ENCODE measurements at regions of chr19 and their contacts with region 1.

Region 1: DNA sequence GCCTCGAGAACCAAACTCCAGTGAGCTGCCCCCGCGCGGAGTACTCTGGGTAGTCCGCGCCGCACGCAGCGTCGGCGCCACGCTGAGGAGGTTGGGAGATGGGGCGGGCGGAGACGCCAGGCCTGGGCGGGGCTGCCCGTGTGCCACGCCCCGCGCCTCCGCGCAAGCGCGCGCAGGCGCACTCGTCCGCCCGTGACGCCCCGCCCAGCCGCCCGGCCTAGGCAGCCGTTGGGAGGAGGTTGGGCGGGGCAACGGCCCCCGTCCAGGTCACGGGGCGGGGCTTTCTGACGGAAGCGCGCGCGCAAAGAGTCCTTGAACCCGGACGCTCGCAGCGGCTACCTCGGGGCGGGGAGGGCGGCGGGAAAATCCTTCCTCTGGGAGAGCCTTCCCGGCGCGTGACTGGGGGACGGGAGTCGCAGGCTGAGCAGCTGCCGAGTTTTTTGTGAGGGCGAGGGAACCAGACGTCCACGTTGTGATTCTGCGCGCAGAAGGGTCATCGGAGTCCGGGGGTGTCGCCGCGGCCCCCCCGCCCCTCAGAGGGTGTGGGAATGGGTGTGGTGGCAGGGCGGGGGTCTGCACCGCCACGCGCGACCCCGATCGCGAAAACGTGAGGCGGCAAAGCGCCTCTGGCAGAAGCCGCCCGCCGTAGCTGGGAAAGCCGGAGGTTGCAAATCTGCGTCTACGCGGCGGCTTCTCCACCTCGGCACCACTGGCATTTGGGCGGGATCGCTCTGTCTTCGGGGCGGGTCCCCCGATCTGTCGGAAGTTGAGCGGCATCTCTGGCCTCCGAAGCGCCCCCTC is at the start of gene MED26:
- DNase-seq: peak; percentile 95 to 96
- ATAC-seq: peak; percentile 93 to 97 (median 95)
- H3K4me3 ChIP-seq: peak within 1 kb of the TSS; percentile 68 to 99 (median 96)
- H3K27ac ChIP-seq: peak within 1 kb of the TSS; percentile 88 to 99 (median 98)
- H3K4me1 ChIP-seq: peaks cover 0 to 55% (median 48%) of the 10 kb centered on the region in 9 donors
- H3K27me3 ChIP-seq: no peaks in the 10 kb centered on the region
- CTCF ChIP-seq: peak in 5 of 9 donors; percentile 11 to 38 (median 26)
- total RNA-seq, gene MED26: 3.3 to 6.9 (median 4.6) TPM

Region 2: GRCh38 chr19:16572332-16573211 is 55.8 kb before region 1 on chr19 and contains the start of gene SLC35E1:
- intact Hi-C with region 1: loop called (anchors 5 to 10 kb)
- DNase-seq: peak; percentile 94 to 96
- ATAC-seq: peak; percentile 96 to 99 (median 98)
- H3K4me3 ChIP-seq: peak within 1 kb of the TSS; percentile 63 to 97 (median 80)
- H3K27ac ChIP-seq: peak within 1 kb of the TSS; percentile 61 to 91 (median 86)
- H3K4me1 ChIP-seq: peaks cover 14 to 58% (median 36%) of the 10 kb centered on the region in 9 donors
- H3K27me3 ChIP-seq: no peaks in the 10 kb centered on the region
- CTCF ChIP-seq: no peak
- total RNA-seq, gene SLC35E1: 20.8 to 29.0 (median 23.6) TPM

Region 3: DNA sequence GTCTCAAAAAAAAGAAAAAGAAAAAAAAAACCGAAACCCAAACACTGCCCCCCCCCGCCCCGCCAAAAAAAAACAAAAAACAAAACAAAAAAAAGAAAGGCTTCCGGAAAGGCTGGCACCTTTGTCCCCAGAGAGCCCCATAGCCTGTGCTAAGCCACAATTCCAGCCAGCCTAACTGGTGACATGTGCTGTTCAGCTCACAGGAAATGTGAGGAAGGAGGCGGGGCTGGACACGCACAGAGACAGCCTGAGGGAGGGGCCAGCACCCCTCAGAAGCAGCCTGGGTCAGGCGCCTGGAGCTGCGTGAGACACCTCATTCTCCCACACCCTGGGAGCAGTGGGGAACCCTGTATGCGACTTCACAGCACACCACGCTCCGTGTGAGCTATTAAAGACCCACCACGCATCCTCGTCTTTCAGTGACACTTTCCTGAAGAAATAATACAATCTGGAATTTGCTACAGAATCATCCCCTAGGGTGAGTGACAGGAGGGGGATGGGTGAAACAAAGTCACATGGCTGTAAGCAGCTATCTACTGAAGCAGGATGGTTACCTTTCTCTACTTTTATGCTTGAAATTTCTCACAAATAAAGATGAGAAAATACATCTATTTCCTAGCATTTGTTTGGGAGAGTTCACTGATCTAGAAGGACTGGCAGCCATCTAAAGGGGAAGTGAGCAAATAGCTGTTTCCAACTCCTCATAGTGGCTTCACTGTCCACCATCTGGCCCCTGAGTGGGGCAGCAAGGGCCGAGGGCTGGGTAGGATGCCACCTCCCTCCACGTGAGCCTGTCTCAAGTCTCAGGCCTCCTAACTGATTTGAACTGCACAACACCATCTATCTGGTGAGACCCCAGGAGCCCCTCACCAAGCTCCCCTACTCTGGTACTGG is 43.9 kb before region 1 on chr19:
- intact Hi-C with region 1: loop called in 9 of 10 experiments (anchors 5 to 10 kb)
- DNase-seq: peak; percentile 76 to 84
- ATAC-seq: peak; percentile 56 to 90 (median 82)
- H3K4me3 ChIP-seq: peak overlapping the region in 6 of 10 donors; percentile 5 to 41 (median 24)
- H3K27ac ChIP-seq: peak overlapping the region in 9 of 10 donors; percentile 17 to 83 (median 57)
- H3K4me1 ChIP-seq: peaks cover 58 to 99% (median 85%) of the 10 kb centered on the region in 9 donors
- H3K27me3 ChIP-seq: no peaks in the 10 kb centered on the region
- CTCF ChIP-seq: no peak

Region 4: DNA sequence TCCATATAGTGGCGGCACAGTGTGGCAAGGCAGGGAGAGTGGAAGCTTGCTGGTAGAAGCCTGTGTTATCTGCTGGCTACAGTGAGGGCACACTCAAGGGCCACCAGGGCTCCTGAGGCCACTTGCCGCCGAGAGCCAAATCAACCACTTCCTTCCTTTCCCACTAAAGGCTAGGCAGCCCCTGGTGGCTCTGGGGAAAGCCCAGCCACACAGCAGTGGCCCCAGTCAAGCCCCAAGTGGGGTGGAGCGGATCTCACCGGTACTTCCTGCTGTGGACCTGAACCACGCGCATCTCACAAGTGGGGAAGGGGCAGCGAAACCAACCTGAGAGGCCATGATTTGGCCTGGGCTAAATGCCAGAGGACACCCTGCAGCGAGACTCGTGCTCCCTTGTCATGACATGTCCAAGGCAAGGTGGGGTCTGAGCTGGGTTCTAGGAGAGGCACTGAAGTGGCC is 34.2 kb before region 1 on chr19:
- intact Hi-C with region 1: loop called in 5 of 10 experiments (anchors 5 kb)
- DNase-seq: no peak
- ATAC-seq: peak in 4 of 8 donors; percentile 12 to 39 (median 26)
- H3K4me3 ChIP-seq: no peak overlapping the region
- H3K27ac ChIP-seq: no peak overlapping the region
- H3K4me1 ChIP-seq: peaks cover 14 to 99% (median 61%) of the 10 kb centered on the region in 9 donors
- H3K27me3 ChIP-seq: no peaks in the 10 kb centered on the region
- CTCF ChIP-seq: no peak

Region 5: GRCh38 chr19:16603090-16603489 is 25.3 kb before region 1 on chr19:
- intact Hi-C with region 1: loop called in 1 of 10 experiments (anchors 1 kb)
- DNase-seq: no peak
- ATAC-seq: no peak
- H3K4me3 ChIP-seq: no peak overlapping the region
- H3K27ac ChIP-seq: no peak overlapping the region
- H3K4me1 ChIP-seq: peaks cover 25 to 87% (median 65%) of the 10 kb centered on the region in 9 donors
- H3K27me3 ChIP-seq: no peaks in the 10 kb centered on the region
- CTCF ChIP-seq: no peak

Region 6: DNA sequence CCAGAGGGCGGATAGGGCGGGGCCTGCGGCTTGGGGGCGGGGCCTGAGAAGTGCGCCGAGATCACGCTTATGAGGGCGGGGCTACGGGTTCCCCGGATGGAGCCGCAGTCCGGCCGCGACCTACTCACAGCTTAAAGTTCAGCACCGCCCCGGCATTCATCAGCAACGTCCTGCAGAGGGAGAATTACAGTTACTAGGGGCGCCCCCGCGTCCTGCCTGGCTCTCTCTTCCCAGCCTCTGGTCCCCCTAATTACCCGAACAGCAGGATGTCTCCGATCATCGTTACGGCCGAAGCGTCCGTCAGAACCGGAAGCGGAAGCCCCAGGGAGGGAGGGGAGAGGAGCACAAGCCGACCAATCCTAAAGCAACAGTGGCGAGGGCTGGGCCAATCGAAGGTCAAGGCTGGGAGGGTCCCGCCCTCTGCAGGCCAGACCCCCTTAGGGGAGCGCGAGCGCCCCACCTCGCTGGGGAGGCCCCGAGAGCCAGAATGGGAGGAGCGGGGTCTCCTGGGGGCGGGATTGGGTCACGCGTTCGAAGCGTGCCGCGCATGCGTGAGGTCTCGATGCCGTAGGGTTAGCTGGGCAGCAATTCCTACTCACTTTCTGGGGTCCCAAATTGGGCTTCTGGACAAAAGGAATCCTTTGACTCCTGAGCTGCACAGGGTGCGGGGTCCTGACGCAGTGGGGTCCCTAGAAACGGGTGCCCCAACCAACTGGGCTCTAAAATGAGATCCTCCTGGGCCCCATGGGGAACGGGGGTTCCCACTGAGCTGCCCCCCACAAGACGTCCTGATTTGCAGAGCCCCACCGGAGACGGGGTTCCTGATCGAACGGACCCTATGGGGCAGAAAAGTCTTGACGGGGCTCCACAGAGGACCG is 31.7 kb after region 1 on chr19 and contains the start of gene SMIM7:
- intact Hi-C with region 1: loop called in 2 of 10 experiments (anchors 2 kb)
- DNase-seq: peak; percentile 99
- ATAC-seq: peak; percentile 97 to 99 (median 98)
- H3K4me3 ChIP-seq: peak within 1 kb of the TSS; percentile 59 to 97 (median 76)
- H3K27ac ChIP-seq: peak within 1 kb of the TSS; percentile 82 to 98 (median 92)
- H3K4me1 ChIP-seq: peaks cover 11 to 65% (median 51%) of the 10 kb centered on the region in 9 donors
- H3K27me3 ChIP-seq: no peaks in the 10 kb centered on the region
- CTCF ChIP-seq: peak in 5 of 9 donors; percentile 14 to 51 (median 39)
- total RNA-seq, gene SMIM7: 32.0 to 43.2 (median 37.4) TPM

Measured in heart right ventricle (tissue), 16 donors.